ENCODE measurements at regions of chr16 and their contacts with region 1.

Region 1: DNA sequence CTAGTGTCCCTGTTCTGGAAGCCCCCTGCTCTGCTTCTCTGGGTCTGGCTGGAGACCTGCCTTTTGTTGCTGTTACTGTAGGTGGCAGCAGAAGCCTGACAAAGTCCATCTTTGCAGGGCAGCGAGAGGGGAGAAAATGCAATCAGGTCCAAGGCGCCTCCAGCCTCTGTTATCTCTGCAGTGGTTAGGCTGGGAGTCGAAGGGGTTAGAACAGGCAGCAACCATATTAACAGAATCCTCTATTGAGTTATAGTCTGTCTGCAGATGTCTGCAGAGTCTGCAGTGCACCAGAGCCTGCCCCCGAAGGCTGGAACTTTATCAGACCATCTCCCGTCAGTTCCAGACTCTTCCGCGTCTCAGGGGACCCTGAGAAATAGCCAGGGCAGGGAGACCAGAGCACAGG is 404.9 kb upstream of the EEF2KMT start:
- DNase-seq: peak in 1 of 2 donors; percentile 14
- ATAC-seq: peak; percentile 74

Region 2: GRCh38 chr16:5615868-5616642 is 113.6 kb after region 1 on chr16:
- intact Hi-C with region 1: loop called in 1 of 2 experiments (anchors 10 kb)
- DNase-seq: peak; percentile 43 to 77
- ATAC-seq: peak; percentile 96